Posterior cingulate gyrus (tissue), 11 donors: ENCODE measurements at regions of chr11 and their contacts with region 1.

Region 1: DNA sequence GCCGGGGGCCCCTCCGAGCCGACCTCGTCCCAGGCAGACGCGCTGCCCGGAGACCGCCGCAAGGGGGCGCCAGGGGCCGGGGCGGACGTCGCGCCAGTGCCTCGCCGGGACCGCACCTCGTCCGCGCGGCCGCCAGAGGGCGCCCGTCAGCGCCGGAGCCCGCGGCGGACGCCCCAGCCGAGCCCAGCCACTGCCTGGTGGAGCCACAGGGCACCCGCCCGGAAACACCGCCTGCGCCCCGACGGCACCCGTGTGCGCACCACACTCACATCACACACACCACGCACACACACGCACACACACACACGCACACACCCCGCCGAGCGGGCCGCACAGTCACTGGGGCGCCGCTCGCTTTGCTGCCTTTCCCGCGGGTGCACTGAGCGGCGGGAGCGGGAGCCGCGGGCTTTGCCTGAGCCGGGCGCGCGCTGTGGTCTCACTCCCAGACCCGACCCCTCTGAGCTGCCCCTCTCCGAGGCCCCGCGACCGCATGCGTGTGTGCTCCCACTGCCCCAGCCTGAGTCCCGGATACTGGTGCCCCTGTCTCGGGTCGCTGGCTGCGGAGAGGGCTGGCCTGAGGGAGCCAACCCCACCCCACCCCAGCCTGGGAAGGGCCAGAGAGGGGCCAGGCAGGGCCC is 449.3 kb downstream of the OPCML start:
- DNase-seq: peak in 9 of 10 donors; percentile 40 to 96 (median 72)

Region 2: GRCh38 chr11:133156986-133157745 is 74.2 kb after region 1 on chr11:
- intact Hi-C with region 1: loop called (anchors 2 kb)
- DNase-seq: peak in 8 of 10 donors; percentile 32 to 94 (median 62)

Region 3: GRCh38 chr11:133163463-133164419 is 80.8 kb after region 1 on chr11:
- intact Hi-C with region 1: loop called (anchors 2 kb)
- DNase-seq: no peak

Region 4: DNA sequence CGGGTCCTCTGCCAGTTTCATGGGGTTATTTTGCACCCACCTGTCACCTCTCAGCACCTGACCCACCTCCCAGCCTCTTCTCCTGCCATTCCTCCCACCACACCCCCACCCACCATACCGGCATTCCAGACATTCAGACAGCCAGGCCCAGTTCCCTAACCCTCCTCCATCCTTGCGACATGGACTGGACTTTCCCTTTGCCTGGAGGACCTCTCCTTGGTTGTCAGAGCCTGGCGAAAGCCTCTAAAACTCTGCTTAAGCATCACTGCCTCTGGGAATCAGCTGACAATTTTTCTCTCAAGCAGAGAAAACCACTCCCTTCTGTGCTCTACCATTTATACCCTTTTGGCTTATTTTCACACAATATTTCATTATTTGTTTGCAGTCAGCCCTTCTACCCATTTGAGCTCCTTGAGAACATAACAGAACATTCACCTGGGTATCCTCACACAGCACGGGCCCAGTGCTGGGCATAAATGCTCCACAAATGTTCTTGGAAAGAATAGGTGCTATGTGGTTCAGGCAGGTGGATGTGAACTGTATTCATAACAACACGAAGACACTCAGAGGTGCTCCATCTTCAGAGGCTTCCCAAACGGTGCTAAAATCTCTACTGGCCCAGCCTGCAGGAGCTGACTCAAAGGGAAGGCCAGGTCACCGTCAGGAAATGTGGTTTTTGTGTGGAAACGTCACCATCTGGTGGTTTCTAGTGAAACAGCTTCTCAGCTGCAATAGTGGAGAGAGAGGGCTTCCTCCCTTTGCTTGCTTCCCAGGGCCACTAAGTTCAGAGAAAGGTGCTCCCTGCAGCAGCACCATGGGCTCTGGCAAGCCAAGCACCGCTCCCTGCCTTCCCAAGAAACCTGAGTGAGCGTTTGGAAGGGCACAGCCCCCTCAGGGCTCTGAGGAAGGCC is 752.0 kb after region 1 on chr11:
- intact Hi-C with region 1: loop called (anchors 2 kb)
- DNase-seq: peak in 6 of 10 donors; percentile 40 to 91 (median 62)